H1 (cell line): ENCODE measurements at regions of chr19 and their contacts with region 1.

Region 1: GRCh38 chr19:58499021-58499927 is 12.5 kb downstream of the SLC27A5 start:
- DNase-seq: peak; percentile 96 to 99
- H3K4me3 ChIP-seq: peak overlapping the region; percentile 72 to 89 (median 76)
- H3K27ac ChIP-seq: peak overlapping the region; percentile 44; the same call in 1 of the 2 replicates
- H3K4me1 ChIP-seq: peaks cover 0 to 14% (median 7%) of the 10 kb centered on the region in 4 experiments; a peak in 4 of 7 replicates
- H3K27me3 ChIP-seq: no peaks in the 10 kb centered on the region
- CTCF ChIP-seq: no peak
- EP300 ChIP-seq: peak; percentile 17 to 41; a peak in 2 of 3 replicates
- POLR2A ChIP-seq: no peak
- RAD21 ChIP-seq: peak in 1 of 2 experiments; percentile 4; a peak in 1 of 4 replicates

Region 2: GRCh38 chr19:58386576-58387337 is 112.5 kb before region 1 on chr19 and contains the start of gene RPS5:
- CTCF ChIA-PET with region 1: no interaction called
- POLR2A ChIA-PET with region 1: no interaction called
- DNase-seq: peak; percentile 93 to 95
- H3K4me3 ChIP-seq: peak within 1 kb of the TSS; percentile 82 to 99 (median 92)
- H3K27ac ChIP-seq: peak within 1 kb of the TSS; percentile 94
- H3K4me1 ChIP-seq: peaks cover 0 to 15% (median 9%) of the 10 kb centered on the region in 4 experiments; a peak in 6 of 7 replicates
- H3K27me3 ChIP-seq: no peaks in the 10 kb centered on the region
- CTCF ChIP-seq: no peak
- EP300 ChIP-seq: no peak
- POLR2A ChIP-seq: peak; percentile 53 to 93
- RAD21 ChIP-seq: no peak; a peak in 1 of 4 replicates
- total RNA-seq, gene RPS5: 1,554 and 1,557 TPM in 2 replicates

Region 3: DNA sequence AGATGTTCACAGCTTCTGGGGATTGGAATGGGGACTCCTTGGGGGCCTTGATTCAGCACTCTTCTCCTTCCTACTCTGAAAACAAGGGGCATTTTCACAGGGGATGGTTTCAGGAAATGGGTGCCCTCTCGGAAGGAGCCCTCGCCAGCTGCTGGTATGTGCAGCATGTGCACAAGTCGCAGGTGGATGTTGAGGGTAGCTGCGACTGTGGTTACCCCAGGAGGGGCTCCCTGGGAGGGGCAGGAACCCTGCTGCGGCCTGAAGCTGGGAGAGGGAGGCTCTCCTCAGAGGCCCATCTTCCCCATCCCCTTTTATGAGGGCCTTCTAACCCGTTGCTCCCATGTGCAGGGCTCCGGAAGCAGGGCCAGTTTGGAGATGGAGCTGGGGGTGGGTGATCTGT is 16.9 kb before region 1 on chr19:
- CTCF ChIA-PET with region 1: interaction called, 12 read pairs
- POLR2A ChIA-PET with region 1: interaction called, 3 read pairs
- DNase-seq: no peak
- H3K4me3 ChIP-seq: no peak overlapping the region
- H3K27ac ChIP-seq: no peak overlapping the region
- H3K4me1 ChIP-seq: no peaks in the 10 kb centered on the region
- H3K27me3 ChIP-seq: no peaks in the 10 kb centered on the region
- CTCF ChIP-seq: no peak
- EP300 ChIP-seq: no peak
- POLR2A ChIP-seq: no peak
- RAD21 ChIP-seq: no peak

Region 4: DNA sequence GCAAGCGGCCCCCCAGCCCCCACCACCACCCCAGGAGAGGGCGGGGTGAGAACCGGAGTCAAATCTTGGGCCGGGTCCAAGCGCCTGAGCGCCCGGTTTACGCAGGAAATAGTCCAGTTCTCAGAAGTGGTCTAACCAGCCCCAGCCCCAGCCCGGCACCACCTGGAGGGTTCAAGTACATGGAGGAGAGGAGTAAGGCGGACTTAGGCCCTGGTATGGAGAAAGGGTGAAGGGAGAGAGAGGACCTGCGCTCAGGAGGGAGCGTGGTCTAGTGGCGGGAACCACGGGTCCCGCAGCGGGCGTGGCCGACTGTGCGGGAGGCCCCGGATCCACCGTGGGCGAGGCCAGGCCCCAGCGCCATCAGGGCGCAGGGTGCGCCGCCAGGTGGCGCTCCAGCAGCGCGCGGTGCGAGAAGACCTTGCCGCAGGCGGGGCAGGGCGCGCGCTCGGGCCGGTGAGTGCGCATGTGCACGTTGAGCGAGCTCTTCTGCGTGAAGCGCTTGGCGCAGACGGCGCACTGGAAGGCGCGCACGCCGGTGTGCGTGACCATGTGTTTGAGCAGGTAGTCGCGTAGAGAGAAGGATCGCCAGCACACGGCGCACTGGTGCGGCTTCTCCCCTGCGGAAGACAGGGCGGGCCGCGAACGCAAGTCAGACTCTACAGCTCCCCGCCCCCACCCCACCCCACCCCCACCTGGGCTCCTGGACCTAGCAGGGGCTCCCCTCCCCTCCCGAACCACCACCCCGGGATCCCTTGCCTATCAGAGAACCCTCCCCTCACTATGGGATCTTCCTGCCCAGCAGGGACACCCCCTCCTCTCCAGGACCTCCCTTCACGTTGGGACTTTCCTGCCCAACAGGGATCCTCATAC is 14.7 kb after region 1 on chr19:
- CTCF ChIA-PET with region 1: interaction called, 27 read pairs
- POLR2A ChIA-PET with region 1: interaction called, 14 read pairs
- DNase-seq: peak; percentile 92 to 97
- H3K4me3 ChIP-seq: peak overlapping the region; percentile 37 to 70 (median 52)
- H3K27ac ChIP-seq: peak overlapping the region; percentile 56; the same call in 1 of the 2 replicates
- H3K4me1 ChIP-seq: peaks cover 0 to 28% (median 16%) of the 10 kb centered on the region in 4 experiments; a peak in 6 of 7 replicates
- H3K27me3 ChIP-seq: no peaks in the 10 kb centered on the region
- CTCF ChIP-seq: peak; percentile 95 to 98 (median 96)
- EP300 ChIP-seq: peak in 1 of 2 experiments; percentile 20; a peak in 1 of 3 replicates
- POLR2A ChIP-seq: peak; percentile 85 to 89
- RAD21 ChIP-seq: peak; percentile 75 to 83

Region 5: GRCh38 chr19:58543826-58544590 is 44.7 kb after region 1 on chr19 and contains the start of gene TRIM28:
- CTCF ChIA-PET with region 1: no interaction called
- POLR2A ChIA-PET with region 1: interaction called, 11 read pairs
- DNase-seq: peak; percentile 91 to 99
- H3K4me3 ChIP-seq: peak within 1 kb of the TSS; percentile 89 to 100 (median 94)
- H3K27ac ChIP-seq: peak within 1 kb of the TSS; percentile 96
- H3K4me1 ChIP-seq: peaks cover 3 to 10% (median 5%) of the 10 kb centered on the region in 4 experiments; a peak in 6 of 7 replicates
- H3K27me3 ChIP-seq: peaks cover 0 to 24% (median 10%) of the 10 kb centered on the region in 4 experiments; a peak in 5 of 7 replicates
- CTCF ChIP-seq: no peak
- EP300 ChIP-seq: 0 out of 3 replicates have a peak, but pooled peaks of 1 of the 2 experiments have one; percentile 1
- POLR2A ChIP-seq: peak; percentile 93 to 95
- RAD21 ChIP-seq: no peak
- total RNA-seq, gene TRIM28: 1,398 and 1,433 TPM in 2 replicates